GM12878 (cell line): ENCODE measurements at regions of chr19 and their contacts with region 1.

Region 1: GRCh38 chr19:42184401-42184861 is 33.0 kb downstream of the DEDD2 start:
- DNase-seq: no peak
- ATAC-seq: peak; percentile 97
- H3K4me3 ChIP-seq: no peak overlapping the region
- H3K27ac ChIP-seq: no peak overlapping the region
- H3K4me1 ChIP-seq: peaks cover 11% of the 10 kb centered on the region
- H3K27me3 ChIP-seq: no peaks in the 10 kb centered on the region; a peak in 1 of 4 replicates
- CTCF ChIP-seq: peak; percentile 83 to 93 (median 86)
- EP300 ChIP-seq: no peak
- POLR2A ChIP-seq: no peak
- RAD21 ChIP-seq: peak; percentile 88

Region 2: DNA sequence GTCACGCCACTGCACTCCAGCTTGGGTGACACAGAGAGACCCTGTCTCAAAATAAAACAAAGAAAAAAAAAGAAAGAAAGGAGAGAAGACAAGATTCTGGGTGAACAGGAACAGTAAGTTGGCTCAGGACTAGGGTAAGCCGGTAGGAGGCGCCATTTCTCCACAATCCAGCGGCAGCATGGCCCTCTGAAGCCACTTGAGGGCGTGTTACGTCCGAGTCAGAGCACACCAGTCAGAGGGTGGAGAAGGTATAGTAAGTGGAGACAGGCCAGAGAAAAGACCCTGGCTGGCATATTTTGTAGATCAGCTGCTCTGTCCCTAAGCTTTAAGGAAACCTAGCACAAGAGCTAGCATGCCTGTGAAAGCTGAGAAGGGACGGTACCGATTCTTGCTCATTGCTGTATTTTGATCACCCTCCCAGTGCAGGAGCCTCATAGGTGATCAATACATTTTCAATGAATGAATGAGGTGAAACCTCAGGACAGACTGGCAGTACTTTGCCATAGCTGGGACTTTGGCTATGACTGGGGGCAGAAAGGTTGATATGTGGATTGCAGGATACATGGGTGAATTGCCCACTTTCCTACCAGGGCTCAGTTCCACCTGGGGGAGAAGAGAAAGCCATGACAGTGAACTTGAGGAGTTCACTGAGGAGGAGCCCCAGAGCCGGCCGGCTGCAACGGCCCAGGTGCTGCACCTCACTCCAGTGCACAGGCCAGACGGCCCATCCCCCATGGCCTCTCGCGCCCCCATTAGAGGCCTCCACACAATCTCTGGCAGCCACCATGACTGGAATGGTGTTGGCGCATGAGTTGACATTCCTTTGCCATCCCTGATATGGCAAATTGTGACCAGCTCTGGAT is 75.7 kb before region 1 on chr19:
- CTCF ChIA-PET with region 1: interaction called, 71 read pairs
- POLR2A ChIA-PET with region 1: no interaction called
- RAD21 ChIA-PET with region 1: interaction called, 14 read pairs
- SMC1A ChIA-PET with region 1: interaction called, 52 read pairs
- in situ Hi-C with region 1: loop called (anchors 5 kb)
- intact Hi-C with region 1: loop called (anchors 1 kb)
- DNase-seq: peak; percentile 72
- ATAC-seq: peak; percentile 99
- H3K4me3 ChIP-seq: no peak overlapping the region
- H3K27ac ChIP-seq: no peak overlapping the region
- H3K4me1 ChIP-seq: peaks cover 31% of the 10 kb centered on the region
- H3K27me3 ChIP-seq: no peaks in the 10 kb centered on the region
- CTCF ChIP-seq: peak; percentile 100; a peak in 5 of 6 replicates
- EP300 ChIP-seq: no peak; a peak in 1 of 4 replicates
- POLR2A ChIP-seq: no peak
- RAD21 ChIP-seq: peak; percentile 100

Region 3: DNA sequence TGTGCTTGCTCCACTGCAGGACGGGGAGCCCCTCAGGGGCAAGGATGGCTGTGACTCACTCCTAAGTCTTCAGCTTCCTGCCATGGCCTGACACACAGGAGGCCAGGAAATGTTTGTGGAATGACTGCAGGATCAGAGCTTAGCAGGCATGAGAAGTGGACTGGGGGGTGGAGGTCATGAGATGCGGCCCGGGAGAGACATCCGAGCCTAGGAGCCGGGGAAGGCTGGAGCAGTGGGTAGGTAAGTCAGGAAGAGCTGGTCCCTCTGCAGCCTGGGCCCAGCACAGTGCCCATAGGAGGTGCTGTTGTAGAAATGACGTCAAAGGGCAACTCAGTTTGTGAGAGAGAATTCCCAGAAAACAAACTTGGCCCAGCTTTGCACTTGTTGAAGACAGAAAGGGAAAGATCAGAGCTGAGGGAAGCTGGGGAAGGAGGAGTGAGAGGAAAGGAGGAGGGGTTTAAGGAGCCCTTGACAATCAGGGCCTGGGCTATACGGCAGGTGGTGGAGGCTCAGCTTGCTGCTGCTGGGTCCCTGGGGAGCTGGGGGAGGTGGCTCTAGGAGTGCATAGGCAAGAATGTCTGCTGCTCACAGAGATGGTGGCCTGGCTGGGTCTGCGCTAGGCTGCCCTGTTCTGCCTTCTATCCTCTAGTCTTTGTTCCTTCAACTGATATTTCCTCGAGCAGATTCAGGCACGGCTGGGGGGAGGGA is 70.6 kb before region 1 on chr19:
- CTCF ChIA-PET with region 1: interaction called, 71 read pairs
- POLR2A ChIA-PET with region 1: no interaction called
- RAD21 ChIA-PET with region 1: interaction called, 14 read pairs
- SMC1A ChIA-PET with region 1: interaction called, 52 read pairs
- in situ Hi-C with region 1: loop called (anchors 5 kb)
- intact Hi-C with region 1: loop called (anchors 1 kb)
- DNase-seq: peak; percentile 40
- ATAC-seq: peak; percentile 90
- H3K4me3 ChIP-seq: 0 out of 2 replicates have a peak overlapping the region, but pooled peaks have one; percentile 2
- H3K27ac ChIP-seq: peak overlapping the region; percentile 88
- H3K4me1 ChIP-seq: peaks cover 53% of the 10 kb centered on the region
- H3K27me3 ChIP-seq: no peaks in the 10 kb centered on the region
- CTCF ChIP-seq: peak in 2 of 3 experiments; percentile 8 to 18; a peak in 1 of 6 replicates
- EP300 ChIP-seq: no peak
- POLR2A ChIP-seq: 0 out of 2 replicates have a peak, but pooled peaks have one; percentile 21
- RAD21 ChIP-seq: no peak

Region 4: GRCh38 chr19:42154471-42155323 is 29.7 kb before region 1 on chr19:
- CTCF ChIA-PET with region 1: no interaction called
- POLR2A ChIA-PET with region 1: no interaction called
- RAD21 ChIA-PET with region 1: no interaction called
- SMC1A ChIA-PET with region 1: no interaction called
- in situ Hi-C with region 1: no loop called
- intact Hi-C with region 1: no loop called
- DNase-seq: no peak
- ATAC-seq: peak; percentile 51
- H3K4me3 ChIP-seq: 0 out of 2 replicates have a peak overlapping the region, but pooled peaks have one; percentile 32
- H3K27ac ChIP-seq: no peak overlapping the region
- H3K4me1 ChIP-seq: peaks cover 9% of the 10 kb centered on the region
- H3K27me3 ChIP-seq: peaks cover 0 to 1% of the 10 kb centered on the region in 2 experiments; a peak in 1 of 4 replicates
- CTCF ChIP-seq: no peak
- EP300 ChIP-seq: no peak
- POLR2A ChIP-seq: no peak
- RAD21 ChIP-seq: no peak

Region 5: GRCh38 chr19:42199440-42200115 is 15.1 kb after region 1 on chr19:
- CTCF ChIA-PET with region 1: interaction called, 10 read pairs
- POLR2A ChIA-PET with region 1: no interaction called
- RAD21 ChIA-PET with region 1: no interaction called
- SMC1A ChIA-PET with region 1: interaction called, 3 read pairs
- in situ Hi-C with region 1: no loop called
- intact Hi-C with region 1: no loop called
- DNase-seq: peak; percentile 68
- ATAC-seq: peak; percentile 77
- H3K4me3 ChIP-seq: peak overlapping the region; percentile 41
- H3K27ac ChIP-seq: peak overlapping the region; percentile 95
- H3K4me1 ChIP-seq: peaks cover 59% of the 10 kb centered on the region
- H3K27me3 ChIP-seq: no peaks in the 10 kb centered on the region
- CTCF ChIP-seq: peak; percentile 55 to 67 (median 61)
- EP300 ChIP-seq: no peak
- POLR2A ChIP-seq: peak; percentile 74
- RAD21 ChIP-seq: peak; percentile 40